ENCODE measurements at regions of chr22 and their contacts with region 1.

Region 1: GRCh38 chr22:28600546-28601143 is 79.0 kb downstream of the TTC28 start:
- DNase-seq: peak; percentile 37
- CTCF ChIP-seq: peak; percentile 45

Region 2: GRCh38 chr22:28505416-28506149 is 95.1 kb before region 1 on chr22:
- CTCF ChIA-PET with region 1: no interaction called
- POLR2A ChIA-PET with region 1: no interaction called
- DNase-seq: no peak
- CTCF ChIP-seq: no peak

Region 3: GRCh38 chr22:28620244-28620922 is 19.7 kb after region 1 on chr22:
- CTCF ChIA-PET with region 1: interaction called, 16 read pairs
- POLR2A ChIA-PET with region 1: no interaction called
- DNase-seq: no peak
- CTCF ChIP-seq: no peak

Measured in GM10248 (cell line).